Lower leg skin (tissue), 4 donors: ENCODE measurements at regions of chr1 and their contacts with region 1.

Region 1: DNA sequence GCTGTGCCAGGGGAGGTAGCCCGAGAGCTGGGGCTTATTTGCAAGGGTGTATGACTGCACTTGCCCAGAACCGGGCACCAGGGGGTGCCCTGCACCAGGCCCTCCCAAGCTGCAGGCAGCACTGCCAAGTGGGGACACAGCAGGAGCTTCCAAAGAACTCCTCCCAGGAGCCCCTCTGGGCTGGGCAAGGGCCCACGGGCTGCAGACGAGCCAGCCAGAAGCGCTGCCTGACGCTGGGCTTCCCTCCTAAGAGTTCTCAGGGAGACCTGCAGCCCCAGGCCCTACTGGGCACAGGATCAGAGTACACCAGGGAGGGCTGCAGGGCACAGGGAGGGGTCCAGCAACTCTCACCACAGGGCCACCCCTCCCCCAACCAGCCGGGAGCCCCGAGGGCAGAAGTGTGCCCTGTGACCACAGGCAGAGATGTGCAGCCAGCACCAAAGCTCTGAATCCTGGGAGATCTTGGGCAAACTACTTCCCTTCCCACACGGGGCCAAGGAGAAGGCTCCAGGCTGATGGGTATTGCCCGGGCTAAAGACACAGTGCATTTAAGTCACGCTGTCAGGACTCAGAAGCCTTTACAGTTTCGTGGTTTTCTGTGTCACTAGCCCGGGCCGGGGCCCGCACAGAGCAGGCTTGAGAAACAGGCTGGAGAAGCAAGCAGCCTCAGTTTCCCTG is 63.4 kb downstream of the KCNAB2 start:
- DNase-seq: no peak
- H3K4me3 ChIP-seq: no peak overlapping the region
- CTCF ChIP-seq: no peak
- POLR2A ChIP-seq: no peak

Region 2: GRCh38 chr1:6185635-6186382 is 76.7 kb after region 1 on chr1:
- intact Hi-C with region 1: loop called (anchors 10 kb)
- DNase-seq: no peak
- H3K4me3 ChIP-seq: no peak overlapping the region
- CTCF ChIP-seq: no peak
- POLR2A ChIP-seq: no peak

Region 3: DNA sequence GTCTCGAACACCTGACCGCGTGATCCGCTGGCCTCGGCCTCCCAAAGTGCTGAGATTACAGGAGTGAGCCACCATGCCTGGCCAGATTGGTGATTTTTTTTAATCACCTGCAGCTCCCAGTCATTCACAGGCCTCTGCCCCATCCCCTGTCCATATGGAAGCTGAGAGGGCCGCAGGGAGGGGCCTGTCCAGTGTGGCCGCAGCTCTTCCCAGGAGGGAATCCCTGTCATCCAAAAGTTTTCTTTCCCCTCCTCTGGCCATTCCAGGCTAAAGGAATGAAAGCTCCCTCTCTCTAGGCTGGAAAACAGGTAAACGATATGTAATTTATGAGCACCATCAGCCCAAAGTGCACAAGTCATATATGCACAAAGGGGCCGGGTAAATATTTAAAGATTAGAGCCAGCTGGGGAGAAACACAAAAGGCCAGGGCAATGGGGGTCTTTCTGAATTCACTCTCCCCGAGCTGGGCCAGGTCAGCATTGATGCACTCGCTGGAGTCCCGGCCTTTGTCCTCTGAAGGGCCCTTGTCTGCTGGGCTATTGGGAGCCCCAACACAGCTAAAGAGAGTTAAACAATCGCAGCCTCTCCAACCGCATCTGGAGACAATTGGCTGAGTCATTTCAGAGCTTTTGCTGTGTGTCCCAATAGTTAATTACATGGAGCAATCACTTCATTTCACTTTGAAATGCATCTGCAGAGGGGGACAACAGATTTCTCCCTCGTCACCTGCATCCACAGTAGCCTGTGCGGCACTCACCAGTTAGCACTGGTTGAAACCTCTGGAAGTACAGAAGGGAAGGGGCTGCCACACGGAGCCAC is 131.1 kb after region 1 on chr1:
- intact Hi-C with region 1: loop called (anchors 5 kb)
- DNase-seq: no peak
- H3K4me3 ChIP-seq: no peak overlapping the region
- CTCF ChIP-seq: no peak
- POLR2A ChIP-seq: no peak

Region 4: GRCh38 chr1:6343506-6344405 is 234.7 kb after region 1 on chr1:
- intact Hi-C with region 1: loop called (anchors 10 kb)
- DNase-seq: peak; percentile 76 to 90
- H3K4me3 ChIP-seq: no peak overlapping the region
- CTCF ChIP-seq: peak in 1 of 3 donors; percentile 55
- POLR2A ChIP-seq: no peak

Region 5: DNA sequence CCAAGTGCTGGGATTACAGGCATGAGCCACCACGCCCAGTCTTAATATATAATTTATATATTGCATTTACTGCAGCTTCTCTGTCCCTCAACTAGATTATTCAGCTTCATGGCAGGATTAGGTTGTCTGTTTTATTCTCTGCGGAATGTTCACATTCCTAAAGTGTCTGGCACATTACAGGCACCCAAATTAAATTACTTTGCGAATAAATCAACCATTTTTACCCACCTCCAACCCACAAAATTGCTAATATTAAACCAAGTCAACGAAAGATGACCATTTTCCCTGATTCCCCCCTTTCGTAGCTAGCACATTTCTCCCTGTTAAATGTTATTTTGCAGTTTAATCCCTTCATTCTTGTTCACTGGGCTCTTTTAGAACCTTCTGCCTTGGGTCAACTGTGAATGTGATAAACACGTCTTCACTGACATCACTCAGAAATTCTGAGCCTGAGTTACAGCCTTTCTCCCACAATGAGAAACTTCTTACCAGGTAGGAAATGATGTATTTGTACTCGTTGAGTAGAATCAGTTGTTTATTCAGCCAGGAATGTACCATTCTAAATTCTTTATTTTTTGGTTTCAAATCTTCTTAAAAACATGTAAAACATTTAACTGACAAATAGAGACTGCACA is 551.5 kb after region 1 on chr1:
- intact Hi-C with region 1: loop called (anchors 5 kb)
- DNase-seq: no peak
- H3K4me3 ChIP-seq: no peak overlapping the region
- CTCF ChIP-seq: no peak
- POLR2A ChIP-seq: no peak